Posterior cingulate gyrus (tissue), 11 donors: ENCODE measurements at regions of chr11 and their contacts with region 1.

Region 1: DNA sequence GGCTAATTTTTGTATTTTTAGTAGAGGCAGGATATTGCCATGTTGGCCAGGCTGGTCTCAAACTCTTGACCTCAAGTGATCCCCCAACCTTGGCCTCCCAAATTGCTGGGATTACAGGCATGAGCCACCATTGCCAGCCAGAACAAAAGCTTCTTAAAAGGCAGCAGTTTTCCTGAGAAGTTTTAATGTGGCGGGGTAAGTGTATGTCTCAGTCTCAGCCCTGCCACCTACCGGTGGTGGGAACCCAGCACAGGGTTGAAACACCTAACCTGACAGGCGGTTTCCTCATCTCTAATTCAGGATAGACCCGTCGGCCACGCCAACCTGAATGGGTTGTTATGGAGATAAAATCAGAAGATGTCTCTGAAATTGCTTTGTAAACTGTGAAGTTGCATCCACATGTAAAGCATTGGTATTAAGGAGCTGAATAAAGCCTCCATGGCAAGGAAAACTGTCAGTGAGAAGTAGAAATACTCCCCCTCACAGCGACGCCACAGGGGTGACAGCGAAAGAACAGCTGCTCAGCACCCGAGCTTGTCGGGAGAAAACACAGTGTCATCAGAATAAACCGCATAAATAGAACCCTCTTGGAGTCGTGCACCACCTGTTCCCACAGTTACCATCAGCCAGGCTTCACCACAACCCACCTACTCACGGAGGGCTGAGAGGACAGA is 165.9 kb upstream of the NCAM1 start:
- DNase-seq: peak in 6 of 10 donors; percentile 41 to 93 (median 71)

Region 2: GRCh38 chr11:112837162-112837826 is 42.0 kb after region 1 on chr11:
- intact Hi-C with region 1: loop called (anchors 5 kb)
- DNase-seq: peak in 7 of 10 donors; percentile 45 to 93 (median 68)